IMR-90 (cell line): ENCODE measurements at regions of chr6 and their contacts with region 1.

Region 1: GRCh38 chr6:126804332-126805064 is 314.0 kb upstream of the RSPO3 start:
- DNase-seq: peak; percentile 55
- ATAC-seq: peak; percentile 87
- H3K4me3 ChIP-seq: no peak overlapping the region
- H3K27ac ChIP-seq: no peak overlapping the region
- H3K4me1 ChIP-seq: no peaks in the 10 kb centered on the region
- H3K27me3 ChIP-seq: no peaks in the 10 kb centered on the region
- CTCF ChIP-seq: peak; percentile 75
- POLR2A ChIP-seq: no peak
- RAD21 ChIP-seq: peak; percentile 73

Region 2: GRCh38 chr6:126033696-126034095 is 770.8 kb before region 1 on chr6:
- CTCF ChIA-PET with region 1: no interaction called
- POLR2A ChIA-PET with region 1: no interaction called
- dilution Hi-C with region 1: no loop called
- in situ Hi-C with region 1: no loop called
- intact Hi-C with region 1: loop called (anchors 5 kb)
- DNase-seq: peak; percentile 91
- ATAC-seq: peak; percentile 96
- H3K4me3 ChIP-seq: no peak overlapping the region
- H3K27ac ChIP-seq: no peak overlapping the region
- H3K4me1 ChIP-seq: no peaks in the 10 kb centered on the region; the same call in 1 of the 2 replicates
- H3K27me3 ChIP-seq: no peaks in the 10 kb centered on the region
- CTCF ChIP-seq: peak; percentile 81
- POLR2A ChIP-seq: no peak
- RAD21 ChIP-seq: peak; percentile 80

Region 3: DNA sequence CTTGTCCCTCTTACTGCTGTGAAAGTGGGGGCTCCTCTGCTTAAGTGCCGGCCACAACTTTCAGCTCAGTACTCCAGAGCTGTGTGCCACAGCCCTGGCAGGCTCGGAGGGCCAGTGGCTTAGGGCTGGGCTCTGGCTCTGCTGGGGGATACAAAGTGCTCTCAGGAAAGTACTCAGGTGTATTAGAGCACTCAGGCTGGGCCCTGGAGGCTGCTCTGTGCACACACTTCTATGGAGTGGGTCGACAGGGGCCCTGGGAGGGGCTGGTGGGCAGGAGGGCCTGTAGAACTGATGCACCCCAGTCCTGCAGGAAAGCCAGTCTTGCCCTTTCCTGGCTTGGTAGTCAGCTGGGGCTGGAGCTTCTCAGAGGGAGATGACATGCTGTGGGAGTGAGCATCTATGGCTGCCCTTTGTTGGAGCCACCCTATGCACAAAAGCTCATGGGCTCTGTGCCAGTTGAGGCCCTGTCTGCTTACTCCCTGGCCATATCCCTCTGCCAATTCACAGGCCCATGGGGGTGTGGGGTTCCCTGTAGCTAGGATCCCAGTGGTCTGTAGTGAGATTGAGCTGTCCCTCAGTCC is 442.6 kb before region 1 on chr6:
- CTCF ChIA-PET with region 1: interaction called, 3 read pairs
- POLR2A ChIA-PET with region 1: no interaction called
- dilution Hi-C with region 1: no loop called
- in situ Hi-C with region 1: no loop called
- intact Hi-C with region 1: loop called (anchors 5 kb)
- DNase-seq: no peak
- ATAC-seq: no peak
- H3K4me3 ChIP-seq: no peak overlapping the region
- H3K27ac ChIP-seq: no peak overlapping the region
- H3K4me1 ChIP-seq: no peaks in the 10 kb centered on the region
- H3K27me3 ChIP-seq: no peaks in the 10 kb centered on the region
- CTCF ChIP-seq: no peak
- POLR2A ChIP-seq: no peak
- RAD21 ChIP-seq: no peak

Region 4: GRCh38 chr6:127069659-127070279 is 265.3 kb after region 1 on chr6:
- CTCF ChIA-PET with region 1: no interaction called
- POLR2A ChIA-PET with region 1: no interaction called
- dilution Hi-C with region 1: no loop called
- in situ Hi-C with region 1: no loop called
- intact Hi-C with region 1: loop called (anchors 1 kb)
- DNase-seq: peak; percentile 45
- ATAC-seq: peak; percentile 76
- H3K4me3 ChIP-seq: no peak overlapping the region
- H3K27ac ChIP-seq: no peak overlapping the region
- H3K4me1 ChIP-seq: no peaks in the 10 kb centered on the region
- H3K27me3 ChIP-seq: no peaks in the 10 kb centered on the region
- CTCF ChIP-seq: peak; percentile 45
- POLR2A ChIP-seq: no peak
- RAD21 ChIP-seq: peak; percentile 45

Region 5: DNA sequence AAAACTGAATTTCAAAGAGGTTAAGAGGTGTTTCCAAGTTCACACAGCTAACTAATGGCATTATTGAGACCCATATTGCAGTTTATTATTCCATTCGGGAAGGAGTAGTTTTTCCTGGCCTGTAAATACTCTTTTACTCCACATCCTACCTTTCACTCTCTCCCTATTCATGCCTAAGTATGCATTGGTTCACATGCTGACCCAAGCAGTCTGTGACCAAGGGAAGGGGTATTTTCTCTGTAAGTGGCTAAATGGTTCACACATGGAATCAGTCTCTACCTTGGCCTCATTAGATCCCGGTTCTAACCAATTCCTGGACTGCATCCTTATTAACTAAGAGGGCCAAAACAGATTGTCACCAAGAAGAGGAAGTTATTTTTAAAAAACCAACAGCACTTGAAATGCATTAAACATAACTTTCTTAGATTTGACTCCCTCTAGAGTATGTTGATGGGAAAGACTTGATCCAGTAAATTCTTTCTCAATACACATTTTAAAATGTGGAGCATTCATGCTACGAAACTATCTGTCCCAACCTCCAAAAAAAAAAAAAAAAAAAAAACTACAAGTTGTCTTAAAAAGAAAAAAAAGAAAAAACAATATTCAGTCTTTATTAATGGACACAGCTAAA is 296.1 kb after region 1 on chr6:
- CTCF ChIA-PET with region 1: interaction called, 7 read pairs
- POLR2A ChIA-PET with region 1: no interaction called
- dilution Hi-C with region 1: no loop called
- in situ Hi-C with region 1: no loop called
- intact Hi-C with region 1: loop called (anchors 1 kb)
- DNase-seq: peak; percentile 41
- ATAC-seq: peak; percentile 56; the same call in 1 of the 2 replicates
- H3K4me3 ChIP-seq: no peak overlapping the region
- H3K27ac ChIP-seq: no peak overlapping the region
- H3K4me1 ChIP-seq: 0 out of 2 replicates have a peak, but pooled peaks cover 4% of the 10 kb centered on the region
- H3K27me3 ChIP-seq: peaks cover 15% of the 10 kb centered on the region
- CTCF ChIP-seq: peak; percentile 43
- POLR2A ChIP-seq: no peak
- RAD21 ChIP-seq: peak; percentile 35

Region 6: DNA sequence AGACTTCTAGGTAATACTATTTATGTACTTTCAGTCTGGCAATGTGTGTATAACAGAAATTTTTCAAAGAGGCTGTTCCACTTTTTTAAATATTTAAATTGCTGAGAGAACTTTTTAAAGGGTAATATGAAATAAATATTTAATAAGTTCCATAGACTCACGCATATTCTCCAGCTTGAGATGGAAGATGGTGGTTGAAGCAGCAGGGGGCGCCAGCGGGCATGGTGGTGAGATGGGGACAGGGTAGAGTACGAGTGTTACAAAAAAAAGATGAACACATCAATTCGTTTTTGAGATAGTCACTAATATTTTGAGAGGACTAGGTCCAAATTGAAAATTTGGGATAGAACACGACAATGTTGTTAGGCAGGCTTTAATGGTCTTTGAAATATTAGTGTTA is 382.4 kb after region 1 on chr6:
- CTCF ChIA-PET with region 1: interaction called, 4 read pairs
- POLR2A ChIA-PET with region 1: no interaction called
- dilution Hi-C with region 1: no loop called
- in situ Hi-C with region 1: no loop called
- intact Hi-C with region 1: loop called (anchors 1 kb)
- DNase-seq: no peak
- ATAC-seq: no peak
- H3K4me3 ChIP-seq: no peak overlapping the region
- H3K27ac ChIP-seq: no peak overlapping the region
- H3K4me1 ChIP-seq: no peaks in the 10 kb centered on the region
- H3K27me3 ChIP-seq: no peaks in the 10 kb centered on the region; the same call in 1 of the 2 replicates
- CTCF ChIP-seq: peak; percentile 37; the same call in 1 of the 2 replicates
- POLR2A ChIP-seq: no peak
- RAD21 ChIP-seq: 0 out of 2 replicates have a peak, but pooled peaks have one; percentile 25

Region 7: DNA sequence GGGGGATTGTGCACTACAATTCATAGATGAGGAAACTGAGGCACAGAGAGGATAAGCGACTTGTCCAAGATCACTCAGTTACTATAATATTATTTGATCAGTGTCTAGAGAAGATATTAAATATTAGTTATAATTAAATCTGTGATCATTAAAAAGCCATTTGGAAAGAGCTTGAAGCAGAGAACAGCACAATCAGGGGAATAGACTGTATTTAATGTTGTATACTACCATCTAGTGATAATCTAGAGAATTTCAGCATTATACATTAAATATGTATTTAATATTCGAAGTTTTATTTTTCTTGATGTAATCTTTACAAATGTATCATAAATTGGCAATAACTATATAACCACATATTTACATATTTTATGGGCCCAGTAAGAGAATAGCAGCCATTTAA is 734.8 kb after region 1 on chr6:
- CTCF ChIA-PET with region 1: no interaction called
- POLR2A ChIA-PET with region 1: no interaction called
- dilution Hi-C with region 1: no loop called
- in situ Hi-C with region 1: no loop called
- intact Hi-C with region 1: loop called (anchors 10 kb)
- DNase-seq: peak; percentile 47
- ATAC-seq: peak; percentile 73
- H3K4me3 ChIP-seq: no peak overlapping the region
- H3K27ac ChIP-seq: no peak overlapping the region
- H3K4me1 ChIP-seq: no peaks in the 10 kb centered on the region
- H3K27me3 ChIP-seq: peaks cover 4% of the 10 kb centered on the region; the same call in 1 of the 2 replicates
- CTCF ChIP-seq: peak; percentile 58
- POLR2A ChIP-seq: no peak
- RAD21 ChIP-seq: peak; percentile 66